PC-9 (cell line): ENCODE measurements at regions of chr17 and their contacts with region 1.

Region 1: DNA sequence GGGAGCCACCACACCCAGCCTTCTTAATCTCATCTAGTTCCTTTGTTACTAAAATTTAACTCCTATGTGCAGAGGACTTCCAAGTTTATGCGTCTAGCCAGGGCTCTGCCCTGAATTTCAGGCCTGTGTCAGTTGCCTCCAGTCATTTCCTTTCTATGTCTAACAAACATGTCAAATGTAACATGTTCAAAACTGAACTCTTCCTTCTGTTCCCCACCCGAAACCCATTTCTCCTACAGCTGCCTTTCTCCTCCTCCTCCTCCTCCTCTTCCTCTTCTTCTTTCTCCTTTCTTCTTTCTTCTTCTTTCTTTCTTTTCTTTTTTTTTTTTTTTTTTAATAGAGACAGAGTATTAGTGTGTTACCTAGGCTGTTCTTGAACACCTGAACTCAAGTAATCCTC is 61.2 kb downstream of the TLK2 start:
- DNase-seq: no peak
- H3K4me3 ChIP-seq: no peak overlapping the region
- H3K27ac ChIP-seq: no peak overlapping the region
- H3K4me1 ChIP-seq: no peaks in the 10 kb centered on the region
- H3K27me3 ChIP-seq: no peaks in the 10 kb centered on the region
- CTCF ChIP-seq: no peak

Region 2: GRCh38 chr17:63325808-63326207 is 786.0 kb after region 1 on chr17:
- CTCF ChIA-PET with region 1: interaction called, 13 read pairs
- POLR2A ChIA-PET with region 1: no interaction called
- intact Hi-C with region 1: no loop called
- DNase-seq: no peak
- H3K4me3 ChIP-seq: no peak overlapping the region
- H3K27ac ChIP-seq: no peak overlapping the region
- H3K4me1 ChIP-seq: no peaks in the 10 kb centered on the region
- H3K27me3 ChIP-seq: no peaks in the 10 kb centered on the region
- CTCF ChIP-seq: no peak